ENCODE measurements at regions of chr19 and their contacts with region 1.

Region 1: GRCh38 chr19:3544742-3545668 is 6.0 kb downstream of the TEKTIP1 start:
- DNase-seq: peak; percentile 73 to 89 (median 80)
- H3K4me3 ChIP-seq: no peak overlapping the region
- H3K27ac ChIP-seq: no peak overlapping the region
- H3K4me1 ChIP-seq: no peaks in the 10 kb centered on the region
- H3K27me3 ChIP-seq: no peaks in the 10 kb centered on the region
- CTCF ChIP-seq: peak; percentile 94 to 97 (median 96)
- POLR2A ChIP-seq: no peak

Region 2: DNA sequence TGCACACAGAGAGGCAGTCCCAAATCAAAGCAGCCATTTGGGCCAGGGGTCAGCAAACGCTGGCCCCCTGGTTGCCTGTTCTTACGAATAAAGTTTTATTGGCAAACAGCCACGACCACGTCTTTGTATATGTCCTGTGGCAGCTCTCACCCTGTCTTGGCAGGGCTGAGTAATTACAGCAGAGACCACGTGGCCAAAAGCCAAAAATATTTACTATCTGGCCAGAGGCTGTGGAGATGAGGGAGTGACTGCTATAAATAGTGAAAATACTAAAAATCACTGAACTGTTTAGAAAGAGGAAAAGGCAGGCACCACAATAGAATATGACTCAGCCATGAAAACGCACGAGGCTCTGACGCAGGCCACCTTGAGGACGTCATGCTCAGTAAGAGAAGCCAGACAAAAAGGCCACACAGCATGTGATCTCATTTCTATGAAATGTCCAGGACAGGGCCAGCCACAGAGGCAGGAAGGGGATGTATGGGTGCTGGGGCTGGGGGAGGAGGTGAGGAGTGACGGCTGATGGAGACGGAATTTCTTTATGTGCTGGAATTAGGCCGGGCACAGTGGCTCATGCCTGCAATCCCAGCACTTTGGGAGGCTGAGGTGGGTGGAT is 94.1 kb before region 1 on chr19:
- intact Hi-C with region 1: no loop called
- DNase-seq: peak; percentile 86 to 96 (median 94)
- H3K4me3 ChIP-seq: no peak overlapping the region
- H3K27ac ChIP-seq: peak overlapping the region; percentile 85 to 98 (median 94)
- H3K4me1 ChIP-seq: peaks cover 7 to 9% of the 10 kb centered on the region in 2 donors
- H3K27me3 ChIP-seq: no peaks in the 10 kb centered on the region
- CTCF ChIP-seq: no peak
- POLR2A ChIP-seq: peak in 1 of 2 donors; percentile 61

Region 3: DNA sequence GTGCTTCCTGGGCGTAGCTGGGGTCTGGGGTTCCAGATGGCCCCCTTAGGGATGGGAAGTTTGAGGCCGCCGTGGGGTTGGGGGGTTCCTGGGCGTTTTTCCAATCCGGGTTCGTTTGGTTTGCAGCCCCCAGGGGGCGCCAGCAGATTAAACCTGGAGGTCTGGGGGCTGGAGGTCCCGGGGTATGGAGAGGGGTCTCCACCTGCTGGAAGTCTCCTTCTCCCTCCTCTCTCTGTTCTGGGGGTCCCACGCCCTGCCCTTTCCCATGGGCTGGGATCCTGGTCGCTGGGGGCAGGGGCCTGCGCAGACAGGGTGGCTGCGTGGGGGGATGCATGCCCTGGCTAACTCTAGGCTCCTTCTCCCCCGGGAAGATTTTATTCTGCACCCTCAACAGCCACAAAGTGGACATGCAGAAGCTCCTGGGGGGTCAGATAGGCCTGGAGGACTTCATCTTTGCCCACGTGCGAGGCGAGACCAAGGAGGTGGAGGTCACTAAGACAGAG is 41.2 kb after region 1 on chr19:
- intact Hi-C with region 1: no loop called
- DNase-seq: no peak
- H3K4me3 ChIP-seq: peak overlapping the region in 1 of 4 donors; percentile 49
- H3K27ac ChIP-seq: no peak overlapping the region
- H3K4me1 ChIP-seq: peaks cover 0 to 3% of the 10 kb centered on the region in 2 donors
- H3K27me3 ChIP-seq: peaks cover 9% of the 10 kb centered on the region
- CTCF ChIP-seq: peak; percentile 20 to 62 (median 46)
- POLR2A ChIP-seq: no peak

Region 4: GRCh38 chr19:3609779-3610719 is 65.0 kb after region 1 on chr19:
- intact Hi-C with region 1: loop called (anchors 5 kb)
- DNase-seq: peak in 3 of 7 donors; percentile 23 to 57 (median 26)
- H3K4me3 ChIP-seq: no peak overlapping the region
- H3K27ac ChIP-seq: peak overlapping the region in 3 of 5 donors; percentile 52 to 94 (median 78)
- H3K4me1 ChIP-seq: peaks cover 26 to 47% of the 10 kb centered on the region in 2 donors
- H3K27me3 ChIP-seq: no peaks in the 10 kb centered on the region
- CTCF ChIP-seq: no peak
- POLR2A ChIP-seq: no peak

Region 5: DNA sequence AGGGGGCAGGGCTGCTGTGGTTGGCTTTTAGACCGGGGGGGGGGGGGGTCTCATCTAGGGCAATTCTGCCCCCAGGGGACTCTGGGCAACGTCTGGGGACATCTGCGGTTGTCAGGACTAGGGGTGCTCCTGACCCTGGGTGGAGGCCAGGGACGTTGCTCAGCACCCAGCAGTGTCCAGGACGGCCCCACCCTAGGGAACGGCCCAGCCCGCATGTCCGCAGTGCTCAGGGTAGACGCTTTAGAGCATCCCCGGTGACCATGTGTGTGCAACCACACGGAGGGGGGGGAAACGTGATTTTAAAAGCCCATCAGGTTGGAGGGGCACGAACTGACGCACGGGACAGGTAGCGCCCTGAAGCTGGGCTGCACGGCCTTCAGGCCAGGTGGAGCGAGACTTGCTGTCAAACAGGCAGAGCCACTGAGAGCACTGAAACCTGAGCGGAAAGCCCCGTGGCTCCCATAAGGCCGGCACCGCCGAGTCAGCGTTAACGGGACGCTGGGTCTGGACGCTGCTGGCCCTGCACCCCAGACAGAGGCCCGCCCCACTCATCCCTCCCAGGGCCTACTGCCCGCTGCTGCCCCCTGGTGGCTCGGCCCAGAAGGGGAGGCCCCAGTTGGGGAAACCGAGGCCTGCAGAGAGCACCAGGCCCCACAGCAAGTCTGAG is 73.3 kb after region 1 on chr19:
- intact Hi-C with region 1: loop called (anchors 5 kb)
- DNase-seq: peak; percentile 62 to 85 (median 80)
- H3K4me3 ChIP-seq: no peak overlapping the region
- H3K27ac ChIP-seq: peak overlapping the region in 1 of 5 donors; percentile 55
- H3K4me1 ChIP-seq: peaks cover 0 to 9% of the 10 kb centered on the region in 2 donors
- H3K27me3 ChIP-seq: no peaks in the 10 kb centered on the region
- CTCF ChIP-seq: peak; percentile 90 to 97 (median 96)
- POLR2A ChIP-seq: no peak